Vagina (tissue), 2 donors: ENCODE measurements at regions of chr1 and their contacts with region 1.

Region 1: GRCh38 chr1:184965944-184966860 is 8.1 kb downstream of the NIBAN1 start:
- DNase-seq: no peak
- H3K4me3 ChIP-seq: no peak overlapping the region
- H3K27ac ChIP-seq: no peak overlapping the region
- H3K4me1 ChIP-seq: peaks cover 20% of the 10 kb centered on the region
- H3K27me3 ChIP-seq: no peaks in the 10 kb centered on the region
- CTCF ChIP-seq: no peak
- POLR2A ChIP-seq: no peak

Region 2: GRCh38 chr1:184881941-184882913 is 84.0 kb before region 1 on chr1:
- intact Hi-C with region 1: loop called (anchors 5 kb)
- DNase-seq: no peak
- H3K4me3 ChIP-seq: no peak overlapping the region
- H3K27ac ChIP-seq: peak overlapping the region; percentile 56
- H3K4me1 ChIP-seq: peaks cover 19% of the 10 kb centered on the region
- H3K27me3 ChIP-seq: no peaks in the 10 kb centered on the region
- CTCF ChIP-seq: no peak
- POLR2A ChIP-seq: no peak

Region 3: DNA sequence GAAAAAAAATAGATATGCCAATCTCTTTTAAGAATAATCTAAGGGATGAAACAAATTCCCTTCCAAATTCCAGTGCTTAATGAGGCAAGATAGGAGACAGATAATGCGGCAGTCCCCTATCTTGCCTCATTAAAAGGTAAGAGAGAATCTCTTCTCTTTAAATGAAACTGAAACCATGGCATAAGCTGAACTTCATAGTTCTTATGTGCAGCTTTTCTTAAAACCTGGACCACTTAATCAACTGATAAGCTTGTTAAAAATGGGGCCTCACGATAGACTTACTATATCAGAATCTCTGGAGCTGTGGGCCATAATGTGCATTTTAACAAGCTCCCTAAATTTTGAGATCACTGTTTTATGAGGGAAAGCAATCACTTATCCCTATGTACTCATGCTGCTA is 71.1 kb before region 1 on chr1:
- intact Hi-C with region 1: no loop called
- DNase-seq: no peak
- H3K4me3 ChIP-seq: no peak overlapping the region
- H3K27ac ChIP-seq: no peak overlapping the region
- H3K4me1 ChIP-seq: peaks cover 18% of the 10 kb centered on the region
- H3K27me3 ChIP-seq: no peaks in the 10 kb centered on the region
- CTCF ChIP-seq: no peak
- POLR2A ChIP-seq: no peak